Aorta (tissue), 5 donors: ENCODE measurements at regions of chr5 and their contacts with region 1.

Region 1: DNA sequence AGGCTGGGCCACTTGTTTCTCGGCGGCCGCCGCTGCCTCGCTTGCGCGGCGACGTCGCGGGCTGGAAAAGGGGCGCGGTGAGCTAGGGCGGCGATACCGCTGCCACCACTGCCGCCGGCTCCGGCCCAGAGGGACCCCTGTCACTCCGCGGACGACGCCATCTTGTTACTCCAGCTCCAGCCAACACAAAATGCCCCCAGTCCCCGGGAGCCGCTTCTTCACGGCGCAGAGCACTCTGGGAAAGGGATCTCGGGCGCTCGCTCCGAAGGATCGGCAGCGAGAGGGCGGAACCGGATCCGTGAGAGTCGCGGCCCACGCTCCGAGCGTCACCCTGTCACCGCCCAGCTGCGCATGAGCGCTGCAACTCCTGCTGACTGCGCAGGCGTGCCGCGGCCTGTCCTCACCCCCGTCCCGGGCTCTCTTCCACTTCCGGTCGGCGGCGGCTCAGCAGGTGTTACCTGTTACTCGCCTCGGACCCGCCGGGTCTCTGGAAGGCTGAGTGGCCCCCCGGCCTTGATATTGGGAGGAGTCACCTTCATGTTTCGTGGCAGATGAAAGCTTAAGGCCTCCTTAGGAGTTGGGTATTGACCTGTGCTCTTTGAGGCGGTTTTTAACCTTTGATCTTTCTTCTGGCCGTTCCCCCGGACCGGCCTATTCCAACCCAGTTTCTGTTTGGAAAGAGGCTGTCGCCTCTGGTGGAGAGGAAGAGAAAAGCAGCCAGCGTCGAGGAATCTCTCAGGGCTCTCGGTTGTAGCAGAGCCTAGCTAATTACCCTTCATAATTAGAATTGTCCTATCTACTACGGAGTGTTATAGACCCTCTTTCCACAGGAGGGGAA is at the start of gene CSNK1A1:
- DNase-seq: peak; percentile 99
- ATAC-seq: peak; percentile 98
- H3K4me3 ChIP-seq: peak within 1 kb of the TSS; percentile 78 to 90
- H3K27ac ChIP-seq: peak within 1 kb of the TSS; percentile 84 to 95
- H3K4me1 ChIP-seq: no peaks in the 10 kb centered on the region
- H3K27me3 ChIP-seq: no peaks in the 10 kb centered on the region
- total RNA-seq, gene CSNK1A1: 226 to 242 TPM

Region 2: GRCh38 chr5:149448831-149449714 is 102.3 kb before region 1 on chr5:
- intact Hi-C with region 1: loop called in 1 of 2 experiments (anchors 5 kb)
- DNase-seq: no peak
- ATAC-seq: no peak
- H3K4me3 ChIP-seq: no peak overlapping the region
- H3K27ac ChIP-seq: peak overlapping the region; percentile 53 to 88
- H3K4me1 ChIP-seq: peaks cover 0 to 3% of the 10 kb centered on the region in 2 donors
- H3K27me3 ChIP-seq: no peaks in the 10 kb centered on the region

Region 3: DNA sequence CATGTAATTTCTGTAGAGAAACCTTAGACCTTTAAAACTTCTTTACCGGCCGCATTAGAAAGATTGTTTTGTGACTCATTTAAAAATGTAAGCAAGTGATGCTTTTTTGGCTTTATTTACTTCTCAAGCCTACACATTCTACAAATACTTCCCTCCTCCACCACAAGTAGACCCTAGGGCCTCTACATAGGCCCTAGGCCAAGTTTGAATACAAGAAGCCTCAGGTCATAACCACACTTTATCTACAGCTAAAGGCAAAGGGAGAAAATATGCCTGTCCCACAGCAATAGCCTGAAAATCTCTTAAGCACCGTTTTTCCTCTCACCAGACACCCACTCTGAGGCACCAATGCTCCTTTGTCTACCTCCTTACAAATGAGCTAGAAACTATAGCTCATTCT is 54.1 kb before region 1 on chr5:
- intact Hi-C with region 1: loop called in 1 of 2 experiments (anchors 5 kb)
- DNase-seq: no peak
- ATAC-seq: no peak
- H3K4me3 ChIP-seq: no peak overlapping the region
- H3K27ac ChIP-seq: peak overlapping the region; percentile 57 to 84
- H3K4me1 ChIP-seq: peaks cover 2 to 6% of the 10 kb centered on the region in 2 donors
- H3K27me3 ChIP-seq: no peaks in the 10 kb centered on the region

Region 4: DNA sequence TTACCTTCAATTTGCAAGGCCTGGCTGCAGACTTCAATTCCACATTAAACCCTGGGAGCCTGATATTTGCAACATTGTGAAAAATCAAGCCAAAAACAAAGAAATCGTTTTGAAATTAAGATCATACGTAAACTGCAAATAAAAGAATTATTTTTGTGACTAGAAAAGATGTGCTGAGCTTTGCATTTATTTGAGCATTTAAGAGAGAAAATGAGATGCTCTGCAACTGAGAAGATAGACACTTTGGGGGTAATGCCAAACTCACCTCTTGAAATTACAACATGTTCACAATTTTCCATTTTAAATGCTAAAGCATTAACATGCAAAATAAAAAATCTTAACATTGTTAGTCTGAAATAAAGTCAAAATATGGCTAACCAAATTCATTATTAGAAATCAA is 46.7 kb before region 1 on chr5:
- intact Hi-C with region 1: loop called (anchors 5 kb)
- DNase-seq: no peak
- ATAC-seq: no peak
- H3K4me3 ChIP-seq: no peak overlapping the region
- H3K27ac ChIP-seq: no peak overlapping the region
- H3K4me1 ChIP-seq: no peaks in the 10 kb centered on the region
- H3K27me3 ChIP-seq: no peaks in the 10 kb centered on the region